CD8-positive, alpha-beta memory T cell (primary cell): ENCODE measurements at regions of chr1 and their contacts with region 1.

Region 1: DNA sequence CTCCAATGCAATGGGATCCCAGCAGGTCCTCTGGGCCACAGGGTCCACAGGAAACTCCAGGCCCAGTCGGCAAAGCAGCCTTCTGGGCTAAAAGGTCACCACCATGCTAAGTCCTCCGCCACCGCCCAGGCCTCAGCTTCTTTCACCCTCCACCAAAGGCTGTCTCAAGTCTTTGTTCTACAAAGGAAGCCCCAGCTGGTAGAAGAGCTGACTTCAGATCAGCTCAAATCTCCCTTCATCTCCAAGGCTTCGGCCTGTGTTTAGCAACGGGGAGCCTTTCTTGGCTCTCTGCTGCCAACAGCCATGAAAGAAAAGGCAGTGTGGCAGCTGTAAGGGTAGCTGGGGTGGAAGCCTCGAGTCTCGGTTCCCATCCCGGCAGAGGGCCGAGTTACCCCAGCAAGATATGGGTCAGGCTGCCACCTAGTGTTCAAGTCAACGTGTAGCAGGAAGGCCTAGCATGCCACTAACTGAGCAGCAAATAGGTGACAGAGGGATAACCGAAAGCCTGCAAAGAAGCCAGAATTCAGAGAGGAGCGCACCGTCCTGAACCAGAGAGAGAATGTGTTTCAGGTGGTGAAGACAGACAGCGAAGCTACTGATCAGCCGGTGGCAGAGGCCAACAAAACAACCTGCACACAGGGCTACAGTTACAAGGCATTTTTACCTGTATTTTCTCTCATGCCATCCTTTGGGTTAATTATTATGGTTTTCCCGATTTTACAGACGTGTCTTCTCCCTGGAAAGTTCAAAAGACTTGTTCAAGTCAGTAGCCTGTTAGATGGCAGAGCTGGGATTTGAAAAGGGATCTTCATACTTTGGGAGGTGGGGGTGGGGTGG is 26.8 kb upstream of the CRNN start:
- DNase-seq: peak; percentile 40 to 80 (median 52)
- H3K4me3 ChIP-seq: no peak overlapping the region
- H3K4me3 Mint-ChIP-seq: no peak overlapping the region
- H3K27ac ChIP-seq: no peak overlapping the region
- H3K27ac Mint-ChIP-seq: peak overlapping the region in 2 of 8 donors; percentile 39 to 79
- H3K4me1 ChIP-seq: no peaks in the 10 kb centered on the region
- H3K4me1 Mint-ChIP-seq: peaks cover 3 to 6% (median 4%) of the 10 kb centered on the region in 3 donors
- H3K27me3 ChIP-seq: no peaks in the 10 kb centered on the region
- H3K27me3 Mint-ChIP-seq: peaks cover 10 to 32% of the 10 kb centered on the region in 2 donors

Region 2: DNA sequence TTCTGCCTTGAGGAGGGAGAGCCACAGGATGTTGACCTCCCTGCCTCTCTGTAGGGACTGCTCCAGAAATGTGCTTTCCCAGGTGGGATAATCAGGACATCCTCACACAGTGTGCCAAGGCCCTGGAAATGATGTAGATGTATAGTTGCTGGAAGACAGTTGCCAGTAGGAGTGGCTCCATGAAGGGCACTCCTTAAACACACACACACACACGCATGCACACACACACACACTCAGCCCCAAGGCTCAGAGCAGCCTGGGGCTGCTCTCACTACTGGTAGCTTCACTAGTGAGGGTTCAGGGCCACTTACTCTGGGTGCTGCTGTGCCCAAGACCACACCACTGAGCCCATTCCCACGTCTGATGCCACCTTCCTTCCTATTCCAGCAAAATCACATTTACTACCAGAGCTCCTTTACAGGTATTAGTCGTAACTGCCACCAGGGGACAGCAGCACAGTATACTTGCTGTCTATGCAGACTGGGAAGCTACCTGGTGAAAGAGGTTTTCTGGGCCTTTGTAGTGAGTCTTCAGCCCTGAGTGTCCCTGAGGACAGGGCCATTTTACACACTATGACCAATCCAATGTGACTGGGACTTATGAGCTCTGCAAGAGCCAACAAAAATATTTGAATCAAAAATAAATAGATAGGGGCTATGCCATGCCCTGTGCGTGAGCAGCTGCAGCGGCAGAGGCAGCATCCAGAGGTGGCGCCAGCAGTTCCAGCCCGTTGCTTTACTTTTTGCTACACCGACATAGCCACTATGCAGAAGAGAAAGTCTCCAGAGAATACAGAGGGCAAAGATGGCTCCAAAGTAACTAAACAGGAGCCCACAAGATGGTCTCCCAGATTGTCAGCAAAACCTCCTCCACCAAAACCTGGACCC is 41.8 kb before region 1 on chr1:
- CTCF ChIA-PET with region 1: interaction called, 12 read pairs
- POLR2A ChIA-PET with region 1: no interaction called
- DNase-seq: no peak
- H3K4me3 ChIP-seq: no peak overlapping the region
- H3K4me3 Mint-ChIP-seq: no peak overlapping the region
- H3K27ac ChIP-seq: no peak overlapping the region
- H3K27ac Mint-ChIP-seq: peak overlapping the region in 1 of 8 donors; percentile 78
- H3K4me1 ChIP-seq: no peaks in the 10 kb centered on the region
- H3K4me1 Mint-ChIP-seq: peaks cover 10 to 23% (median 13%) of the 10 kb centered on the region in 3 donors
- H3K27me3 ChIP-seq: no peaks in the 10 kb centered on the region
- H3K27me3 Mint-ChIP-seq: peaks cover 15 to 16% of the 10 kb centered on the region in 2 donors